ENCODE measurements at regions of chr10 and their contacts with region 1.

Region 1: DNA sequence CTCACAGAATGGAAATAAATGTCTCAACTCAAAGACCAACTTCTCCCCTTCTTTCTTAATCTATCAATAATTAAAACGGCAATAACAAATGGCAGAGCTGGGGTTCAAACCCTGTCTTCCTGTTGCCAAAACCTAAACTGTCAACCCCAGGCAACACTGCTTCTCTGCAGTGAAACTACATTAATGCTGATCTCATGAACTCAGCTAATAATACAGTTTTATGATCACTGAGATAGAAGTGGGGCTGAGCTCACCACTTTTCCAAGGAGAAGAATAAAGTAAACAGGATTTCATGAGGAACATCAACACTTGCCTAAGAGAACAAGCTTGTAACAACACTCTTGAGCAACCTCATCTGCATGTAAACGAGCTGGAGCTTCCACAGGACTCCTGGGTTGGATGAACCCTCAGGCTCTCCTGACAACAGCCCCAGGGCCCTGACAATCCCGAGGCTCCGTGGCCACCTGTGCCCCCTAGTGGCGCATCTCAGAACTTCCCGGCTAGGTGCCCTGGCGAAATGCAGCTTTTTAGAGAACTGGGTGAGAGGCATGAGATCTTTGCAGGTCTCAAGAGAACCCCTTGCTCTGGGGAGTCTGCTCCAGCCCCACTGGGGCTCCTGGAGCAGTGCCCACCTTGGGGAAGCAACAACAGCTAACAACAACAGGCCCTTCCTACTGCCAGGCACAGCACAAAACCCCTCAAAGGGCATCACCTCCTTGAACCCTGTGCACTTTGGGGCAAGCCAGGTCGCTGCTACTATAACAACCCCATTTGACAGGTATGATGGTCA is 169.3 kb downstream of the SH3PXD2A start:
- DNase-seq: no peak
- H3K4me3 ChIP-seq: no peak overlapping the region
- H3K27ac ChIP-seq: peak overlapping the region; percentile 47
- H3K27me3 ChIP-seq: no peaks in the 10 kb centered on the region
- CTCF ChIP-seq: peak; percentile 98

Region 2: GRCh38 chr10:103592186-103593021 is 93.7 kb before region 1 on chr10:
- CTCF ChIA-PET with region 1: interaction called, 146 read pairs
- POLR2A ChIA-PET with region 1: no interaction called
- DNase-seq: no peak
- H3K4me3 ChIP-seq: no peak overlapping the region
- H3K27ac ChIP-seq: no peak overlapping the region
- H3K27me3 ChIP-seq: no peaks in the 10 kb centered on the region
- CTCF ChIP-seq: peak; percentile 77

Region 3: DNA sequence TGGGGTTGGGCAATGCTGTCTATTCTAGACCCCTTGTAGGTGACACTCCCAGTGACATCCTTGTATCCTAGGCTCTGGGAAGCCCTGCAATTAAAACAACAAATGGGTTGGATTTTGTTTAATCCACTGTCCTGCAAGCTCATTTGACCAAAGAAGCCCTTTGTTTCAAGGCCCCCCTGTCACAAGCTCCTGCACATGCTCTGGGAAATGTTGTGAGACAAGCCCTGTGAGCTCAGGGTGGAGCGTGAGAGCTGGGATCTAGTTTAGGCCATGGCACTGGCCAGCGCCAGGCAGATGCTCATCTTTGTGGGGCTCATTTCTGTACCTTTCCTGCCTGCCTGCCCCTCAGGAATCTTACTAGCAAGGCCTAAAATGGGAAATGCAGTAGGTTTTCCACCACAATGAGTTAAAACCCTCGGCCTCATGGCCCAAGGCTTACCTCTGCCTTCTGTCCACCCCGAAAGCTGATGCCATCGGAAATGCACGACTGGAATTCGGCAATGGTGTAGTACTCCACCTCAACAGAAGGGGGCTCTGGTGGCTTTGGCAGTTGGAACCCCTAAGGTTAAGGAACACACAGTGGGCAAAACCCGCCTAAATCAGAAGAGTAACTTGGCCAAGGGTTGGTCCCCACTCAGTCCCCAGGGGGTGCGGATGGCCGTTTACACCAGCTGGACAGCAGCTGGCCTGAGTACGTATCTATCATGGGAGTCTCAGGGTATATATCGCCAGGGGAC is 80.5 kb before region 1 on chr10:
- CTCF ChIA-PET with region 1: interaction called, 50 read pairs
- POLR2A ChIA-PET with region 1: interaction called, 3 read pairs
- DNase-seq: no peak
- H3K4me3 ChIP-seq: no peak overlapping the region
- H3K27ac ChIP-seq: no peak overlapping the region
- H3K27me3 ChIP-seq: no peaks in the 10 kb centered on the region
- CTCF ChIP-seq: peak; percentile 83

Region 4: GRCh38 chr10:103618575-103619423 is 67.3 kb before region 1 on chr10:
- CTCF ChIA-PET with region 1: interaction called, 50 read pairs
- POLR2A ChIA-PET with region 1: no interaction called
- DNase-seq: no peak
- H3K4me3 ChIP-seq: no peak overlapping the region
- H3K27ac ChIP-seq: peak overlapping the region; percentile 31
- H3K27me3 ChIP-seq: no peaks in the 10 kb centered on the region
- CTCF ChIP-seq: no peak

Region 5: GRCh38 chr10:103659674-103660363 is 26.3 kb before region 1 on chr10:
- CTCF ChIA-PET with region 1: interaction called, 25 read pairs
- POLR2A ChIA-PET with region 1: interaction called, 6 read pairs
- DNase-seq: peak; percentile 69
- H3K4me3 ChIP-seq: peak overlapping the region; percentile 80
- H3K27ac ChIP-seq: peak overlapping the region; percentile 83
- H3K27me3 ChIP-seq: no peaks in the 10 kb centered on the region
- CTCF ChIP-seq: peak; percentile 32; the same call in 1 of the 2 replicates

Region 6: DNA sequence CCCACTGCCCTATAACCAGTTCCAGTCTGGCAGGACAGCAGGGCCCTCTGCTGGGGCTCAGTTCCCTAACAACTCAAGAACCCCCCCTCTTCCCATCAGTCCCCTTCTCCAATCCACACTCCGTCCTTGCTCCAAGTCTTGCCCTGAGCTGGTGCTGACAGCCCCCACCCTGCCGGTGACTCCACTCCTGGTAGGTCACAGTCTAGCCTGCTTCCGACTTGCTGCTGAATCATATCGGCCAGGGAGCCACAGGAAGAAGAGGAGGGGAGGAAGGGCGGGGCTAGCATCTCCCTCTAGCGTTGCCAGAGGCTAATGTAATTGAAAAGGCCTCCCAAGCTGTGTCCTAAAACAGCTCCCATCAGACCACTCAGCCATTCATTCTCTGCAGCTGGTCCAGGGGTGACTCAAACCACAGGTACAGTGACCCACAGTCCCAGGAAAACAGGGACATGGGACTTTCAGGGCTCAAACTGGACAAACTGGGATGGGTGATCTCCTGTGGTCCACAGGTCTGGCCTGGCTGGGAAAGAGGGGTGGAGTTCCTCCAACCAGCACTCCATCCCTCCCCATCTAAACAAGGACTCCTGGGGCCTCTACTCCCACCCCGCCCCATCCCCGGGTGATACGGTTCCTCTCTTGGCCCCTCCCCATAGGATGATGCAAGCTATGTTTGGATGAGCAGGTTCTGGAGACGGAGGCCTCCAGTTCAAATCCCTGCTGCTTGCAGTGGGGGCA is 10.5 kb after region 1 on chr10:
- CTCF ChIA-PET with region 1: interaction called, 21 read pairs
- POLR2A ChIA-PET with region 1: interaction called, 7 read pairs
- DNase-seq: peak; percentile 58
- H3K4me3 ChIP-seq: 0 out of 2 replicates have a peak overlapping the region, but pooled peaks have one; percentile 2
- H3K27ac ChIP-seq: peak overlapping the region; percentile 86
- H3K27me3 ChIP-seq: no peaks in the 10 kb centered on the region
- CTCF ChIP-seq: peak; percentile 72

Region 7: GRCh38 chr10:103772096-103772845 is 86.2 kb after region 1 on chr10:
- CTCF ChIA-PET with region 1: no interaction called
- POLR2A ChIA-PET with region 1: no interaction called
- DNase-seq: peak; percentile 99
- H3K4me3 ChIP-seq: peak overlapping the region; percentile 43
- H3K27ac ChIP-seq: peak overlapping the region; percentile 53
- H3K27me3 ChIP-seq: no peaks in the 10 kb centered on the region
- CTCF ChIP-seq: no peak